GM12878 (cell line): ENCODE measurements at regions of chr7 and their contacts with region 1.

Region 1: GRCh38 chr7:95916573-95917297 is 144.4 kb downstream of the DYNC1I1 start:
- DNase-seq: peak; percentile 3
- ATAC-seq: peak; percentile 90
- H3K4me3 ChIP-seq: no peak overlapping the region
- H3K27ac ChIP-seq: no peak overlapping the region
- H3K4me1 ChIP-seq: no peaks in the 10 kb centered on the region
- H3K27me3 ChIP-seq: no peaks in the 10 kb centered on the region; a peak in 1 of 4 replicates
- CTCF ChIP-seq: peak; percentile 74 to 93 (median 87)
- EP300 ChIP-seq: no peak
- POLR2A ChIP-seq: no peak
- RAD21 ChIP-seq: peak; percentile 93

Region 2: DNA sequence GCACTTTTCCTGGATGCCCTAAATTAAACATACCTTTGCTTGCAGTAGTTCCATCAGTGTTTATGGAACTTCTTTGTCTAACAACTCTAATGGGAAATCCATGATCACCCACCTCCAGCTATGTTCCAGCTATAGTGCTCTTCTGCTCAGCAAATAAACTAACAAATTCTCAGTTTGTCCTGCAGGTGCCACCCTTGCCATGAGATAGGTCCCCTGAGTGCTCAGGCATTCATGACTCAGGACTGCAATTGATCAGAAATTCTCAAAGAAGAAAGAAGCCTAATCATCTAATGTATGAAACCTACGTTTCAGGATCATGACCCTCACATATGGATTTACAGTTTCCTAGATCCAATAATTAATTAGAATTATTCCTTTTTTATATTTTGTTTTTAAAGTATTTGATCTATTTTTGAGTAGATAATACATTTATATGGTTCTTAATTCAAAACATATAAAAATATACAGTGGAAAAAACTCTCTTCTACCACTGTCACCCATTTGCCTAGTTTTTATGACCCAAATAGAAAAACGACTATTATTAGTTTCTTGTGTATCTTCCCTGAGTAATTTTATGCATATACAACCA is 193.0 kb before region 1 on chr7:
- CTCF ChIA-PET with region 1: interaction called, 16 read pairs
- POLR2A ChIA-PET with region 1: no interaction called
- RAD21 ChIA-PET with region 1: interaction called, 6 read pairs
- SMC1A ChIA-PET with region 1: interaction called, 10 read pairs
- in situ Hi-C with region 1: no loop called
- intact Hi-C with region 1: no loop called
- DNase-seq: peak; percentile 11
- ATAC-seq: peak; percentile 86
- H3K4me3 ChIP-seq: no peak overlapping the region
- H3K27ac ChIP-seq: no peak overlapping the region
- H3K4me1 ChIP-seq: no peaks in the 10 kb centered on the region
- H3K27me3 ChIP-seq: peaks cover 0 to 2% of the 10 kb centered on the region in 2 experiments; a peak in 1 of 4 replicates
- CTCF ChIP-seq: peak in 2 of 3 experiments; percentile 36 to 67; a peak in 3 of 6 replicates
- EP300 ChIP-seq: no peak
- POLR2A ChIP-seq: no peak
- RAD21 ChIP-seq: peak; percentile 56

Region 3: GRCh38 chr7:95758187-95758586 is 158.5 kb before region 1 on chr7:
- CTCF ChIA-PET with region 1: no interaction called
- POLR2A ChIA-PET with region 1: no interaction called
- RAD21 ChIA-PET with region 1: no interaction called
- SMC1A ChIA-PET with region 1: no interaction called
- in situ Hi-C with region 1: no loop called
- intact Hi-C with region 1: no loop called
- DNase-seq: no peak
- ATAC-seq: no peak
- H3K4me3 ChIP-seq: no peak overlapping the region
- H3K27ac ChIP-seq: no peak overlapping the region
- H3K4me1 ChIP-seq: no peaks in the 10 kb centered on the region
- H3K27me3 ChIP-seq: no peaks in the 10 kb centered on the region
- CTCF ChIP-seq: no peak
- EP300 ChIP-seq: no peak
- POLR2A ChIP-seq: no peak
- RAD21 ChIP-seq: no peak

Region 4: GRCh38 chr7:95899919-95900513 is 16.7 kb before region 1 on chr7:
- CTCF ChIA-PET with region 1: interaction called, 12 read pairs
- POLR2A ChIA-PET with region 1: no interaction called
- RAD21 ChIA-PET with region 1: no interaction called
- SMC1A ChIA-PET with region 1: interaction called, 3 read pairs
- in situ Hi-C with region 1: no loop called
- intact Hi-C with region 1: no loop called
- DNase-seq: no peak
- ATAC-seq: no peak
- H3K4me3 ChIP-seq: no peak overlapping the region
- H3K27ac ChIP-seq: no peak overlapping the region
- H3K4me1 ChIP-seq: no peaks in the 10 kb centered on the region
- H3K27me3 ChIP-seq: no peaks in the 10 kb centered on the region
- CTCF ChIP-seq: no peak; a peak in 1 of 6 replicates
- EP300 ChIP-seq: no peak
- POLR2A ChIP-seq: no peak
- RAD21 ChIP-seq: no peak

Region 5: DNA sequence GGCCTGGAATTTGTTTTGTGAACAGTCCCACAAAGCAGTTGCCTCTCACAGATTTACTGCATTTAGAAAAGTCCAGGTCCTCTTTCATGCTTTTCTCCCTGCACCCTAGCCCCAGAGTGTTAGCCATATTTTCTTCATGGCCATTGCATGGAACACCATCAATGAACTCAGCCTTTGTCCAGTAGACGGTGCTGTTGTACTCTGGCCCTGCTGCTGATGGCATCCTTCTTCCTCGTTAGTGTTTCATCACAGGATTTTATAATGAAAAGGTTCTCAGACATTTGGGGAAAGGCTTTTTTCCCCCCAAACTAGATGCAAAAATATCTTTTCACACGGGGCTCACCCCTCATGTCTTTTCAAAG is 498.2 kb after region 1 on chr7:
- CTCF ChIA-PET with region 1: interaction called, 3 read pairs
- POLR2A ChIA-PET with region 1: no interaction called
- RAD21 ChIA-PET with region 1: no interaction called
- SMC1A ChIA-PET with region 1: no interaction called
- in situ Hi-C with region 1: no loop called
- intact Hi-C with region 1: loop called (anchors 10 kb)
- DNase-seq: peak; percentile 7
- ATAC-seq: peak; percentile 93
- H3K4me3 ChIP-seq: no peak overlapping the region
- H3K27ac ChIP-seq: no peak overlapping the region
- H3K4me1 ChIP-seq: no peaks in the 10 kb centered on the region
- H3K27me3 ChIP-seq: no peaks in the 10 kb centered on the region; a peak in 1 of 4 replicates
- CTCF ChIP-seq: peak; percentile 71 to 88 (median 84)
- EP300 ChIP-seq: no peak
- POLR2A ChIP-seq: no peak
- RAD21 ChIP-seq: peak; percentile 88

Region 6: DNA sequence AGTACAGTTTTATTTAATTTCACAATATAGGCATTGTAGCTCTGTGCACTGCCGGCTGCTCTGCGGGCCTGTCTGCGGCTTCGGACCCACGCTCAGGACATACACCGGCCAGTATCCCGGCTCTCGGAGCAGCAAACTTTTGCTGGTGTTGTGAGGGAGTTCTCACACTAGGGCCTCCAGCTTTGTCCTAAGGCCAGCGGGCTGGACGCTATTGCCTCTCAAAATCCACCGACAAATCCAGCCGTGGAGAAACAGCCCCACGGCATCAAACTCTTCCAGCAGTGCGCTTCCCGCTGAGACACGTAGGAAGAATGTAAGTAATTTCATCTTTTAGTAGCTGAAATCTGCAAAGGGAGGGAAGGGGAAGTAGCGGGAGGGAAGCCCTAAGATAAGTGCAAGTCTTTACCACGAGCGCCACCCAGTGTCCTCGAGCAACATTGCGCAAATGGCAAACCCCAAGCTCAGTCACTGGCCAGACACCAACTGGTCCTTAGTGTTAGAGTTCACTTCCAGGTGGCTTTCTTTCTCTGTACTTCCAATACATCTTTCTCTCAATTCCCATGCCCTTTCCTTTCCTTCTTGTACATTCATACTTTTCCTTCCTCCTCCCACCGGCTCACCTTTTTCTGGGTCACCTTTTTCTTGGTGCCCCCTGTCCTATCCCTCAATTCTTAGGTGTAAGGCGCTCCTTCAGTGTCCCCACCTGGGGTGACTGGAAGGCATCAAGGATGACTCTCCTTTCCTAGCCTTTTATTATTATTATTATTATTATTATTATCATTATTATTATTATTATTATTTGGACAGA is 1110.9 kb after region 1 on chr7:
- CTCF ChIA-PET with region 1: interaction called, 91 read pairs
- POLR2A ChIA-PET with region 1: no interaction called
- RAD21 ChIA-PET with region 1: interaction called, 28 read pairs
- SMC1A ChIA-PET with region 1: interaction called, 22 read pairs
- in situ Hi-C with region 1: loop called (anchors 5 kb)
- intact Hi-C with region 1: loop called (anchors 1 kb)
- DNase-seq: peak; percentile 13
- ATAC-seq: peak; percentile 99
- H3K4me3 ChIP-seq: no peak overlapping the region
- H3K27ac ChIP-seq: no peak overlapping the region
- H3K4me1 ChIP-seq: no peaks in the 10 kb centered on the region
- H3K27me3 ChIP-seq: peaks cover 15 to 25% of the 10 kb centered on the region in 2 experiments
- CTCF ChIP-seq: peak; percentile 87 to 94 (median 89)
- EP300 ChIP-seq: no peak
- POLR2A ChIP-seq: no peak
- RAD21 ChIP-seq: peak; percentile 93

Region 7: GRCh38 chr7:97835296-97836138 is 1918.8 kb after region 1 on chr7:
- CTCF ChIA-PET with region 1: no interaction called
- POLR2A ChIA-PET with region 1: no interaction called
- RAD21 ChIA-PET with region 1: no interaction called
- SMC1A ChIA-PET with region 1: no interaction called
- in situ Hi-C with region 1: loop called (anchors 10 kb)
- intact Hi-C with region 1: loop called (anchors 1 kb)
- DNase-seq: peak; percentile 9
- ATAC-seq: peak; percentile 97
- H3K4me3 ChIP-seq: no peak overlapping the region
- H3K27ac ChIP-seq: no peak overlapping the region
- H3K4me1 ChIP-seq: no peaks in the 10 kb centered on the region
- H3K27me3 ChIP-seq: no peaks in the 10 kb centered on the region
- CTCF ChIP-seq: peak; percentile 29 to 68 (median 63); a peak in 5 of 6 replicates
- EP300 ChIP-seq: no peak
- POLR2A ChIP-seq: no peak
- RAD21 ChIP-seq: peak; percentile 80